ENCODE measurements at regions of chr10 and their contacts with region 1.

Region 1: DNA sequence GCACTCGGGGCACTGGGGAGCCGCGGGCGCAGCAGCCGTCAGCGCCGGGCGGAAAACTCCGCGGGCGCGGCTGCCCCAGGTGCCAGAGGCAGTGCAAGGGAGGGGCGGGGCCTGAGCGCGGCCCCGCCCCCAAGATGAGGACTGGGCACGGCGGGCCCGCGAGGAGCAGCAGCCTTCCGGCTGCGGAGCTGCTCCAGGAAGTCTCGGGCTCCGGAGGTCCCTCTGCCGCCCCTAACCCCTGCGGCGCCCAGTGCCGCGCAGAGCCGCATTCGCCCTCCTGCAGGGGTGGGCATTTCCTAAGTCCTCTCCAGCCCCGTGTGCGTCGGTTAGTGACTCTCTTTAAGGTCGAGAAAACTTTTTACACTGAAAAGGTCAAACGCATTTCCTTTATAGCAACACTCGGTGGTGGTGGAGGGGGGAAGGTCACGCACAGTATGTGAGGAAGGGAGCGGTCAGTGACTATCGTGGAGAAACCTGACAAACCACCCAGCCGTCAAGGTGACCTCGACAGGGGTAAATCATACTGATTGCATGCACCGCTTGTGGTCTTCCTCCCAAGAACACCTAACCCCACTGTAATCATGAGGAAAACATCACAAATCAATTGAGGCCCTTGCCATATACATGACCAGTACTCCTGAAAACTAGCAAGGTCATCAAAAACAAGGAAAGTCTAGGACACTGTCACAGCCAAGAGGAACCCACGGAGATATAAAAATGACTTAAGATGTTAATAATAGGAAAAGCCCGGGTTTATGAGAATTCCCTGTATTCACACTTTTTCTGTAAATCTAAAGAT is at the start of gene ANXA11:
- DNase-seq: peak; percentile 62
- H3K4me3 ChIP-seq: peak within 1 kb of the TSS; percentile 16 to 71 (median 50)
- H3K27ac ChIP-seq: peak within 1 kb of the TSS; percentile 87
- H3K4me1 ChIP-seq: peaks cover 38% of the 10 kb centered on the region
- H3K27me3 ChIP-seq: no peaks in the 10 kb centered on the region
- CTCF ChIP-seq: no peak
- POLR2A ChIP-seq: peak; percentile 62
- total RNA-seq, gene ANXA11: 122 and 143 TPM in 2 replicates

Region 2: GRCh38 chr10:79542626-79543025 is 663.1 kb before region 1 on chr10:
- CTCF ChIA-PET with region 1: no interaction called
- POLR2A ChIA-PET with region 1: no interaction called
- dilution Hi-C with region 1: no loop called
- intact Hi-C with region 1: no loop called
- DNase-seq: no peak
- H3K4me3 ChIP-seq: no peak overlapping the region
- H3K27ac ChIP-seq: no peak overlapping the region
- H3K4me1 ChIP-seq: no peaks in the 10 kb centered on the region
- H3K27me3 ChIP-seq: no peaks in the 10 kb centered on the region
- CTCF ChIP-seq: no peak
- POLR2A ChIP-seq: no peak

Region 3: DNA sequence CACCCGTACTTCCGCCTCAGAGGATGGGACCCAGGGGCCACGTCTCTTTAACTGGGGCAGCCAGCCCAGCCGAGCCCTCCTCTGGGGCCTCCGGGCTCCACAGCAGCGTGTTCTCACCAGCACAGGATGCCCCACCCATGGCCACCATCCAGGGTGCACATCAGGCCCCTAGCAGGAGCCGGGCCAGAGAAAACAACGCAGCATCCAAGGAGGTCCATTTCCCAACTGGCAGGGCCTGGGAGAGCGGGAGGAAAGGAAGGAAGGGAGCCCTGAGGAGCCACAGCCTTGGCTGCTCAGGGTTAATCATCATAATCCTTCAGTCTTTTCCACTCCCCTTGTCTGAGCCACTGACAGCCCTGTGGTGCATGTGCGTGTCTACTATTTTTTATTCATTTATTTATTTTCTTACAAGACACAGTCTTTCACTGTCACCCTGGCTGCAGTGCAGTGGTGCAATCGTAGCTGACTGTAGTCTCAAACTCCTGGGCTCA is 69.6 kb before region 1 on chr10:
- CTCF ChIA-PET with region 1: no interaction called
- POLR2A ChIA-PET with region 1: no interaction called
- dilution Hi-C with region 1: no loop called
- intact Hi-C with region 1: no loop called
- DNase-seq: peak; percentile 83
- H3K4me3 ChIP-seq: no peak overlapping the region
- H3K27ac ChIP-seq: no peak overlapping the region
- H3K4me1 ChIP-seq: peaks cover 10% of the 10 kb centered on the region
- H3K27me3 ChIP-seq: peaks cover 0 to 2% of the 10 kb centered on the region in 2 experiments
- CTCF ChIP-seq: no peak
- POLR2A ChIP-seq: no peak

Region 4: DNA sequence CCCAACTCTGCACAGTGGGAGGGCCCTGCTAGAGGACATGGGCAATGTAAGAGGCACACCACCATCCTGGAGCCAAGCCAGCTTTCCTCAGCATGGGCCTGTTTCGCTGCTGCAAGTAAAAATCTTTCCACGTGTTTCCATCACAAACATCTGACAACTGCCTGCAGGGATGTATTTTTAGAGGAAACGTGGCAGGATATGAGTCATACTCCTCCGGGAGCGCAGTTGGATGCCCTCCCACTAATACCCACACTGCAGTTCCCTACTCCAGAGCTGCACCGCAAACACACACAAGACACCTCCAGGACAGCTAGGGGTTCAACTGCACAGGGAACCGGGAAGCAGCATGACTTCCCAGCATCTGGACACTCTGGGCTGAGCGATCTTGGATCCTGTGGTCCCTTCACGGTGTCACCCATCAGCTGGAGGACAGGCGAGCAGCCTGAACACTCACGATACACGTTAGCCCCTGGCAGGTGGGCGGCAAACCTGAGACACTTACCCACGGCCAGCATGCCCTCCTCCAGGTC is 47.0 kb before region 1 on chr10:
- CTCF ChIA-PET with region 1: interaction called, 6 read pairs
- POLR2A ChIA-PET with region 1: no interaction called
- dilution Hi-C with region 1: no loop called
- intact Hi-C with region 1: loop called (anchors 1 kb)
- DNase-seq: peak; percentile 96
- H3K4me3 ChIP-seq: no peak overlapping the region
- H3K27ac ChIP-seq: peak overlapping the region; percentile 21
- H3K4me1 ChIP-seq: peaks cover 17% of the 10 kb centered on the region
- H3K27me3 ChIP-seq: no peaks in the 10 kb centered on the region
- CTCF ChIP-seq: no peak
- POLR2A ChIP-seq: no peak

Region 5: DNA sequence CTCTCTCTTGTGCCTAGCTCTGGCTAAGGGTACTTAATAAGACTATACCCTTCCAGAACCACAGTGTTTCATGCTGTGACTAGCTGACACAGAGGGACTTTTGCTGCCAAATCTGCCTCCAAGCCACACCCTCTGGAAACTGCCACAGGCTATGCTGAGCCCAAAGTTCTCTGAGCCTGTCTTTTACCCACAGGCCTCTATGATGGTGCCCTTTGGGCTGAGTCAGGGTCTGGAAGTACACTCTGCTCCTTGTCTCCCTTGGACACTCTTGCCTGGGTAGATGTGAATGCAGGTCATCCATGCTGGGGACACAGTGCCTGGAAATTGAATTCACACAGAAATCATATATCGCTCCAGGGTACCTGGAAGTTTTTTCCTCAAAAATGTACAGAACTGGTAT is 128.3 kb after region 1 on chr10:
- CTCF ChIA-PET with region 1: no interaction called
- POLR2A ChIA-PET with region 1: no interaction called
- dilution Hi-C with region 1: no loop called
- intact Hi-C with region 1: no loop called
- DNase-seq: no peak
- H3K4me3 ChIP-seq: no peak overlapping the region
- H3K27ac ChIP-seq: no peak overlapping the region
- H3K4me1 ChIP-seq: no peaks in the 10 kb centered on the region
- H3K27me3 ChIP-seq: peaks cover 2 to 8% of the 10 kb centered on the region in 2 experiments
- CTCF ChIP-seq: no peak
- POLR2A ChIP-seq: no peak

Region 6: GRCh38 chr10:80408242-80409101 is 202.8 kb after region 1 on chr10 and contains the start of gene PRXL2A:
- CTCF ChIA-PET with region 1: no interaction called
- POLR2A ChIA-PET with region 1: no interaction called
- dilution Hi-C with region 1: no loop called
- intact Hi-C with region 1: loop called (anchors 5 kb)
- DNase-seq: peak; percentile 90
- H3K4me3 ChIP-seq: peak within 1 kb of the TSS; percentile 81 to 89 (median 87)
- H3K27ac ChIP-seq: peak within 1 kb of the TSS; percentile 93
- H3K4me1 ChIP-seq: peaks cover 42% of the 10 kb centered on the region
- H3K27me3 ChIP-seq: no peaks in the 10 kb centered on the region
- CTCF ChIP-seq: peak in 1 of 2 donors; percentile 4
- POLR2A ChIP-seq: peak; percentile 90
- total RNA-seq, gene PRXL2A: 290 and 321 TPM in 2 replicates